ENCODE measurements at regions of chr20 and their contacts with region 1.

Region 1: GRCh38 chr20:1577906-1578305 is 20.4 kb upstream of the SIRPD start:
- DNase-seq: no peak
- H3K4me3 ChIP-seq: no peak overlapping the region
- H3K27ac ChIP-seq: no peak overlapping the region
- H3K4me1 ChIP-seq: no peaks in the 10 kb centered on the region
- H3K27me3 ChIP-seq: no peaks in the 10 kb centered on the region
- CTCF ChIP-seq: no peak
- EP300 ChIP-seq: no peak
- POLR2A ChIP-seq: no peak

Region 2: GRCh38 chr20:1619861-1620444 is 42.0 kb after region 1 on chr20 and contains the start of gene SIRPB1:
- intact Hi-C with region 1: loop called (anchors 2 kb)
- DNase-seq: peak in 1 of 2 donors; percentile 14
- H3K4me3 ChIP-seq: peak within 1 kb of the TSS in 1 of 4 donors; percentile 20
- H3K27ac ChIP-seq: peak within 1 kb of the TSS in 2 of 5 donors; percentile 66 to 67
- H3K4me1 ChIP-seq: peaks cover 0 to 20% (median 0%) of the 10 kb centered on the region in 4 donors
- H3K27me3 ChIP-seq: no peaks in the 10 kb centered on the region
- CTCF ChIP-seq: no peak
- EP300 ChIP-seq: no peak
- POLR2A ChIP-seq: no peak
- total RNA-seq, gene SIRPB1: 0.87 to 14.0 (median 2.9) TPM in 3 of 5 donors, not detected in the others

Region 3: GRCh38 chr20:2022163-2022562 is 444.3 kb after region 1 on chr20:
- intact Hi-C with region 1: no loop called
- DNase-seq: no peak
- H3K4me3 ChIP-seq: no peak overlapping the region
- H3K27ac ChIP-seq: no peak overlapping the region
- H3K4me1 ChIP-seq: no peaks in the 10 kb centered on the region
- H3K27me3 ChIP-seq: peaks cover 0 to 31% (median 7%) of the 10 kb centered on the region in 3 donors
- CTCF ChIP-seq: no peak
- EP300 ChIP-seq: no peak
- POLR2A ChIP-seq: no peak